ENCODE measurements at regions of chr15 and their contacts with region 1.

Region 1: DNA sequence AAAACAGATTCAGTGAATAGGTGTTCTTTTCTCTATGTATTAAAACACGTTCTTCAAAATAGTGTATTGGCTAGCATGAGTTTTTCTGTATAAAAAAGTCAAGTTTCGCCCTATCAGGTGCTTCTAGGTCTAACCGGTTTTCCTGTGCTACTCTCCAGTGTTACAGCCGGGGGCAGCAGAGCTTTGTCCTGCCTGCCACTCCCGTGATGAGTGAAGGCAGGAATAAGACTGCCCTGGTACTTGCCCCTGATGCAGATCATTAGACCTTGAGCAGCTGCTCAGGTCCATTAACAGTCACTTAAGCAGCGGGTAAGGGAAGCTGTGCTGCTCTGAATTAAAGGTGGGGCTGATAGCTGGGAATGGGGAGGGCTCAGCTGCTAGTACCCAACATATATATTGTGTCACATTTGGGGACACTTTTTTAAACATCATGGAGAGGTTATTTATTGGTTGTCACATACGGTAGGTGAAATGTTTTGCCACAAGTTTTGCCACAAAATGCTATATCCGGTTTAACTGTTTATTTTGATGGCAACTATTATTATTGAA is 1.3 kb upstream of the UNC13C start:
- DNase-seq: peak; percentile 69
- H3K4me3 Mint-ChIP-seq: no peak overlapping the region
- H3K27ac Mint-ChIP-seq: no peak overlapping the region
- H3K4me1 Mint-ChIP-seq: peaks cover 7% of the 10 kb centered on the region
- H3K27me3 Mint-ChIP-seq: no peaks in the 10 kb centered on the region
- CTCF ChIP-seq: peak; percentile 50

Region 2: DNA sequence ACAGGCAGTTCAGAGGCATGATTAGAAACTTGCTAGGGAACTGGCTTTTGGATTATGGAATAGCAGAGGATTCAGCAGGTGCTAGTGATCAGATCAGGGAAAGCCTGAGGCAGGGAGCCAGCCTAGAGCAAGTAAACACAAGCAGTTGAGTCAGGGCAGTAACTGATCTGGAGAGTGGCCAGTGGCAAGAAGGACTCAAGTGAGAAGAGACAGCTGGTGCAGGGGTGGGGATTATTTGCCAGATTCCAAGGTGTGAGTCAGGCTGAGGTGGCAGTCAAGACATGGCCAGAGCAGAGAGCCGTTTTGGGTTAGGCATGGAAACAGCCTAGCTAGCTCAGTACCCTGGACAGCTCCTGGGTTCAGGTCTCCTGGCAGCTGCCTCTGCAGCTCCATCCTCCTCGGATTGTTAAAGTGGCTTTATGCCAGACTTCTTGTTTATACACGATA is 904.9 kb before region 1 on chr15:
- CTCF ChIA-PET with region 1: no interaction called
- intact Hi-C with region 1: no loop called
- DNase-seq: peak; percentile 96
- H3K4me3 Mint-ChIP-seq: no peak overlapping the region
- H3K27ac Mint-ChIP-seq: no peak overlapping the region
- H3K4me1 Mint-ChIP-seq: peaks cover 22% of the 10 kb centered on the region
- H3K27me3 Mint-ChIP-seq: peaks cover 14% of the 10 kb centered on the region
- CTCF ChIP-seq: no peak

Region 3: GRCh38 chr15:54638666-54639065 is 661.7 kb after region 1 on chr15:
- CTCF ChIA-PET with region 1: no interaction called
- intact Hi-C with region 1: no loop called
- DNase-seq: no peak
- H3K4me3 Mint-ChIP-seq: no peak overlapping the region
- H3K27ac Mint-ChIP-seq: no peak overlapping the region
- H3K4me1 Mint-ChIP-seq: no peaks in the 10 kb centered on the region
- H3K27me3 Mint-ChIP-seq: no peaks in the 10 kb centered on the region
- CTCF ChIP-seq: no peak

Region 4: GRCh38 chr15:54792526-54792925 is 815.6 kb after region 1 on chr15:
- CTCF ChIA-PET with region 1: no interaction called
- intact Hi-C with region 1: loop called (anchors 10 kb)
- DNase-seq: no peak
- H3K4me3 Mint-ChIP-seq: no peak overlapping the region
- H3K27ac Mint-ChIP-seq: no peak overlapping the region
- H3K4me1 Mint-ChIP-seq: no peaks in the 10 kb centered on the region
- H3K27me3 Mint-ChIP-seq: no peaks in the 10 kb centered on the region
- CTCF ChIP-seq: no peak

Region 5: DNA sequence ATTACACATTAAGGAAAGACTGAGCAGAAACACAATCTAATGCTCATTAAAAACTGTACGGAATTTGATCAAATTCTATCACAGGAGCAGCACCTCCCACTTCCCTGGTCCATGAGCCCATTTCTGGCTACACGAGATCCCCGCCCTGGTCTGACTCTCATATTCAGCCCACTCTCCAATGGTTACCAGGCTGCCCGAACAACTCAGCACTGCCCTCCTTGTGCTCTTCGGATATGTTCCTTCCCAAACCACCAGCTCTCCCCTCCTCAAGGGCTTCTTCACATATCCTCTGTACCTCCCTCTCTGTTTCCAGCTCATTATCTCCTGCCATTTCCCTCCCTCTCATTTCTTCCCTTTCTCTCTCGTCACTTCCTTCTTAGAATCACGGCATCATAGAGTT is 1039.3 kb after region 1 on chr15:
- CTCF ChIA-PET with region 1: no interaction called
- intact Hi-C with region 1: loop called (anchors 10 kb)
- DNase-seq: no peak
- H3K4me3 Mint-ChIP-seq: no peak overlapping the region
- H3K27ac Mint-ChIP-seq: no peak overlapping the region
- H3K4me1 Mint-ChIP-seq: no peaks in the 10 kb centered on the region
- H3K27me3 Mint-ChIP-seq: no peaks in the 10 kb centered on the region
- CTCF ChIP-seq: no peak

Measured in Calu3 (cell line).